ENCODE measurements at regions of chr1 and their contacts with region 1.

Region 1: DNA sequence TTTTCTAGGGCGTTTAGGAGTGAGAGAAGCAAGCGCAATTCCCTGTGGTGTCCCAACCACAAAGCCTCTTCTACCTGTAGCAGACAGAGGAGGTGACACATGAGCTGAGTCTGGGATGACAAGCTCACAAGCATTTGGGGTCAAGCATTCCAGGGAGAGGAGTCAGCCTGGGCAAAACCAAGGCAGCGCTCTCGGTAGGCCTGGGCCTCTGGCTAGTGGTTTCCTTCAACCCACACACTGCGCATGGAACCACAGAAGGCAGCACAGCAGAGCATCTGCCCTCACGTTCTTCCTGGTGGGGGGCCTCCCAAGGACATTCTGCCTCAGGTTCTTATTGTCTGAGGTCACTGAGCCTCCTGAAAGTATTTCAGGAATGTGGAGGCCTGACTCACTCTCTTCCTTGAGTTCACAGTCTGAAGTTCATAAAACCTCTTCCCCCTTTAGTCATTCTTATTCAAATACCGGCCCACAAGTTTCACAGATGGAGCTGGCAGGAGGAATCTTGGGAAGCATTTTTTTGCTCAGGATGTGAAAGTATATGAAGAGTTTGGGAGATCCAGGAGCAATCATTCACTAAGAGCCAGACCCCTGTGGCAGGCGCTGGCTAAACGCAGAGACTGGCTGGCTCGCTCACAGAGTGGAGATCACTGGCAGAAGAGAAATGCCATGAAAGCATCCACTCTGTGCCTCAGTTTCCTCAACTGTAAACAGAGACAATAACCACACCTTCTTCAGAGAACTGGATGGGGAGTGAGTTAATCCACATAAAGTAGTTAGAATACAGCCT is 26.8 kb downstream of the CCN1 start:
- DNase-seq: peak; percentile 93
- ATAC-seq: peak; percentile 90
- H3K4me3 ChIP-seq: peak overlapping the region in 1 of 2 experiments; percentile 12; a peak in 2 of 4 replicates
- H3K27ac ChIP-seq: peak overlapping the region; percentile 47
- H3K4me1 ChIP-seq: peaks cover 39 to 57% of the 10 kb centered on the region in 2 experiments
- H3K27me3 ChIP-seq: no peaks in the 10 kb centered on the region
- CTCF ChIP-seq: no peak
- POLR2A ChIP-seq: no peak
- RAD21 ChIP-seq: peak; percentile 23; the same call in 1 of the 2 replicates

Region 2: DNA sequence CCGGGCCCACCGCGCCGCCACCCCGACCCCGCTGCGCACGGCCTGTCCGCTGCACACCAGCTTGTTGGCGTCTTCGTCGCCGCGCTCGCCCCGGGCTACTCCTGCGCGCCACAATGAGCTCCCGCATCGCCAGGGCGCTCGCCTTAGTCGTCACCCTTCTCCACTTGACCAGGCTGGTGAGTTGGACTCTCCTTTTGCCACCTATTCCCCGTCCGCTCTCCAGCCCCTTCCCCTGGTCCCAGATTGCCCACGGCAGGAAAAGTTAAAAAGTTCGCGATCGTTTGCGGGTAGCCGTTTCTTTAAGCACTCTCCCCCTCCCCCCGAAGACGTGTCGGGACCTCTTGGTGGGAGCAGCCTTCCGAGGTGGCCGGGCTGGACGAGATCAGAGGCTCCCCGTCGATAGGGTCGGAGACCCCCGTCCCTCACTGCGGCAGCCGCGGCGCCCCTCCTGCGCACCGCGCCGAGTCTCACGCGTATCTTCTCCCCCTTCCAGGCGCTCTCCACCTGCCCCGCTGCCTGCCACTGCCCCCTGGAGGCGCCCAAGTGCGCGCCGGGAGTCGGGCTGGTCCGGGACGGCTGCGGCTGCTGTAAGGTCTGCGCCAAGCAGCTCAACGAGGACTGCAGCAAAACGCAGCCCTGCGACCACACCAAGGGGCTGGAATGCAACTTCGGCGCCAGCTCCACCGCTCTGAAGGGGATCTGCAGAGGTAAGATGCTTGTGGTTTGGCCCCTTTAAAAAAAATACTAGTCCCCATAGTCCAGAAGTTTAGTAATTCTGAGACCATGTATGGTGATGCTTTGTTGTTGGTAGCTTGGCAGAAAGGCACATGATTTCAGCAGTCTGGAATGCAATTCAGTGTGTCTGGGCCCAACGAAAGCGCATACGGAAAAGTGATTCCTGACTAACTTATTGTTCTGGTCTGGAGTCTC is 26.2 kb before region 1 on chr1:
- CTCF ChIA-PET with region 1: interaction called, 12 read pairs
- POLR2A ChIA-PET with region 1: interaction called, 12 read pairs
- RAD21 ChIA-PET with region 1: no interaction called
- intact Hi-C with region 1: loop called (anchors 1 kb)
- DNase-seq: no peak
- ATAC-seq: peak; percentile 65
- H3K4me3 ChIP-seq: peak overlapping the region; percentile 74 to 93
- H3K27ac ChIP-seq: peak overlapping the region; percentile 71
- H3K4me1 ChIP-seq: peaks cover 32 to 72% of the 10 kb centered on the region in 2 experiments
- H3K27me3 ChIP-seq: no peaks in the 10 kb centered on the region
- CTCF ChIP-seq: peak; percentile 82 to 89 (median 83)
- POLR2A ChIP-seq: no peak
- RAD21 ChIP-seq: peak; percentile 81